Mucosa of descending colon (tissue), 3 donors: ENCODE measurements at regions of chr12 and their contacts with region 1.

Region 1: GRCh38 chr12:43835656-43836474 is at the start of gene TMEM117:
- DNase-seq: peak; percentile 69 to 82 (median 82)
- ATAC-seq: peak; percentile 92
- H3K4me3 ChIP-seq: peak within 1 kb of the TSS; percentile 65
- H3K4me1 ChIP-seq: peaks cover 5% of the 10 kb centered on the region
- CTCF ChIP-seq: no peak
- total RNA-seq, gene TMEM117: 10.1 to 15.2 (median 12.3) TPM

Region 2: GRCh38 chr12:43758728-43759563 is 76.9 kb before region 1 on chr12 and contains the starts of genes IRAK4 and PUS7L:
- intact Hi-C with region 1: loop called in 1 of 2 experiments (anchors 5 kb)
- DNase-seq: peak; percentile 96 to 98 (median 97)
- ATAC-seq: peak; percentile 99
- H3K4me3 ChIP-seq: peak within 1 kb of the TSS; percentile 27
- H3K4me1 ChIP-seq: peaks cover 20% of the 10 kb centered on the region
- CTCF ChIP-seq: peak; percentile 44
- total RNA-seq, gene IRAK4: 20.8 to 22.0 (median 20.9) TPM
- total RNA-seq, gene PUS7L: 9.2 to 18.0 (median 15.1) TPM